HepG2 (cell line): ENCODE measurements at regions of chr15 and their contacts with region 1.

Region 1: DNA sequence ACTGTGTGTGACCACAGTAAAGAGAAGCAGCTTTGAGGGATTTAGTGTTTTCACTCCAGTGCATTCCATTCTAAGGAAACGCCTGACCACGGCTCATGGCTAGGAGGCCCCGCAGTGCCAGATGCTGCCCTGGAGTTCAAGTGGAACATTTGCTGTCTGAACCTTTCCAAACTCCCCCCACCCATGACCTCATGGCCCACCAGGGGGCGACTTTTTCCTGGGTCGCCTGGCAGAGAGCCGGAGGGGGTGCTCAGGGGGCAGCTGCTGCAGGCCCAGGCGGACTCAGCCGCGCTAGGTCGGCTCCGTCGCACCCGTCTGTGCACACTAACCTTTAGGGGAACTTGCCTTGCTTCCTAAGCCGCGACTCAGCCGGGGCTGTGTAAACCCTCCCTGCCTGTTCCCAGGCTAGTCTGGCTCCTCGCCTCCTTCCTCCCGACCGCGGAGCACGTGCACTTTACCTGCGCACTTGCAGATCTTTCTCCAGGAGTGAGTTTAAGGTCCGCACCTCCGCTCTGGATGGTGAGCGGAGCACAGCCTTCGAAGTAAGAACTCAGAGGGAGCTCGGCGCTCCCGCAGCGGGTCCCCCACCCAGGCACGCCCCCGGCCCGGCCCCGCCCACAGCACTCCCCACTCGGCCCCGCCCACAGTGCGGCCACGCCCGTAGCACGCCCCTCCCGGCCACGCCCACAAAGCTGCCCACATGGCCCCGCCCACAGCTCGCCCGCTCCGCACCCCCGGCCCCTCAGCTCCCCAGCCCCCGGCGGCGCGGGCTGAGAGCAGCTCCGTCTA is at the start of gene OCA2:
- DNase-seq: peak; percentile 51
- ATAC-seq: peak; percentile 48
- H3K4me3 ChIP-seq: peak within 1 kb of the TSS; percentile 30 to 67 (median 45)
- H3K27ac ChIP-seq: no peak within 1 kb of the TSS
- H3K4me1 ChIP-seq: peaks cover 37% of the 10 kb centered on the region
- H3K27me3 ChIP-seq: peaks cover 10 to 78% of the 10 kb centered on the region in 2 experiments; a peak in 4 of 5 replicates
- CTCF ChIP-seq: peak; percentile 64
- EP300 ChIP-seq: no peak
- POLR2A ChIP-seq: no peak
- RAD21 ChIP-seq: 0 out of 2 replicates have a peak, but pooled peaks have one; percentile 32
- total RNA-seq, gene OCA2: 0.02 TPM in 1 of 2 replicates, not detected in the other

Region 2: GRCh38 chr15:27479296-27480140 is 619.4 kb before region 1 on chr15:
- CTCF ChIA-PET with region 1: no interaction called
- POLR2A ChIA-PET with region 1: no interaction called
- in situ Hi-C with region 1: no loop called
- intact Hi-C with region 1: no loop called
- DNase-seq: no peak
- ATAC-seq: no peak
- H3K4me3 ChIP-seq: no peak overlapping the region
- H3K27ac ChIP-seq: no peak overlapping the region
- H3K4me1 ChIP-seq: no peaks in the 10 kb centered on the region
- H3K27me3 ChIP-seq: no peaks in the 10 kb centered on the region
- CTCF ChIP-seq: no peak
- EP300 ChIP-seq: no peak
- POLR2A ChIP-seq: no peak
- RAD21 ChIP-seq: no peak

Region 3: DNA sequence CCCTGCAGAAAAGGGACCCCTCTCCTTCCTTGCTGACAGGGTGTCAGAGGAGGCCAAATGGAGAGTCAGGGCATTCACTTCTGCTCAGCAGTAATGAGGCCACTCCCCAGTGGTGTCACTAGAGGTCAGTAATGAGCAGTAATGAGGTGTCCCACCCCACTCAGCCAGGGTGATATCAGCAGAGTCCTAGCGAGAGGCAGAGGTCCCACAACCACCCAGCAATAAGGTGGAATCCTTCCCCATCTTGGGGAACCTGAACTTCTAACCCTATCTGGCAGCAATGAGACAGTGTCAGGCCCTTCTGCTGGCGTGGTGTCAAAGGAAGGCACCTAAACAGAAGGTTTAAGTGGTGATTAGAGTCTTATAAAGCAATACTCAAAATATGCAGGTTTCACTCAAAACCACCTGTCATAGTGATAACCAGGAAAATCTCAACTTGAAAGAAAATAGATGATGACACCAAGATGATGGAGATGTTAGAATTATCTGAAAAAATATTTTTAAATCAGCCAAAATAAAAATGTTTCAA is 12.7 kb before region 1 on chr15:
- CTCF ChIA-PET with region 1: no interaction called
- POLR2A ChIA-PET with region 1: no interaction called
- in situ Hi-C with region 1: no loop called
- intact Hi-C with region 1: loop called (anchors 1 kb)
- DNase-seq: peak; percentile 60
- ATAC-seq: peak; percentile 98
- H3K4me3 ChIP-seq: no peak overlapping the region
- H3K27ac ChIP-seq: no peak overlapping the region
- H3K4me1 ChIP-seq: peaks cover 14% of the 10 kb centered on the region
- H3K27me3 ChIP-seq: no peaks in the 10 kb centered on the region
- CTCF ChIP-seq: peak; percentile 82
- EP300 ChIP-seq: no peak
- POLR2A ChIP-seq: no peak
- RAD21 ChIP-seq: no peak

Region 4: GRCh38 chr15:28123408-28124023 is 24.6 kb after region 1 on chr15:
- CTCF ChIA-PET with region 1: no interaction called
- POLR2A ChIA-PET with region 1: no interaction called
- in situ Hi-C with region 1: no loop called
- intact Hi-C with region 1: loop called (anchors 1 kb)
- DNase-seq: peak; percentile 57
- ATAC-seq: peak; percentile 95
- H3K4me3 ChIP-seq: no peak overlapping the region
- H3K27ac ChIP-seq: no peak overlapping the region
- H3K4me1 ChIP-seq: no peaks in the 10 kb centered on the region
- H3K27me3 ChIP-seq: no peaks in the 10 kb centered on the region
- CTCF ChIP-seq: peak; percentile 81
- EP300 ChIP-seq: no peak
- POLR2A ChIP-seq: no peak
- RAD21 ChIP-seq: no peak; the same call in 1 of the 2 replicates